Testis (tissue), 5 donors: ENCODE measurements at regions of chr12 and their contacts with region 1.

Region 1: DNA sequence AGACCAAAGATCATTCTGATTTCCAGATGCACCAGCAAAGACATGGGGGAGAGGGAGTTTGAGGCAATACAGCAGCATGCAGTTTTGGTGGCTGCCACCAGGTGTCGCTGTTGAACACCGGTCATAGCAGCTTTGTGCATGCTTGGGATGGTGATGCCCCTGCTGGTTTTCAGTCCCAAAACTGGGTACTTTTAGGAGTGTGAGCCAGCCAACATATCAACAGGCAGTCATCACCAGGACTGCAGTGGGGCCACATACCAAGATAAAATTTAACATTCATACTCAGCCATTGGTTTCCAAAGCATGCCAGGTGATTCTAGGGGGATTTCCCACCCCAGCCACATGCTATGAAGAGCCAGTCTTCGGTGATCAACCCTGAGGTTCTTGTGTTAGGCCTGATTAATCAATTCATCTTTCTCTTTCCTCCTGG is 64.2 kb downstream of the PHETA1 start:
- DNase-seq: peak; percentile 61
- H3K4me3 ChIP-seq: no peak overlapping the region
- H3K27ac ChIP-seq: no peak overlapping the region
- H3K4me1 ChIP-seq: no peaks in the 10 kb centered on the region
- H3K27me3 ChIP-seq: no peaks in the 10 kb centered on the region
- CTCF ChIP-seq: peak in 2 of 3 experiments; percentile 67 to 71
- POLR2A ChIP-seq: no peak

Region 2: GRCh38 chr12:110937104-110937641 is 367.5 kb before region 1 on chr12:
- intact Hi-C with region 1: loop called (anchors 10 kb)
- DNase-seq: peak; percentile 67
- H3K4me3 ChIP-seq: peak overlapping the region in 1 of 2 donors; percentile 15
- H3K27ac ChIP-seq: no peak overlapping the region
- H3K4me1 ChIP-seq: no peaks in the 10 kb centered on the region
- H3K27me3 ChIP-seq: no peaks in the 10 kb centered on the region
- CTCF ChIP-seq: peak; percentile 80 to 96 (median 87)
- POLR2A ChIP-seq: no peak

Region 3: GRCh38 chr12:111720457-111720856 is 415.8 kb after region 1 on chr12:
- intact Hi-C with region 1: no loop called
- DNase-seq: no peak
- H3K4me3 ChIP-seq: no peak overlapping the region
- H3K27ac ChIP-seq: no peak overlapping the region
- H3K4me1 ChIP-seq: no peaks in the 10 kb centered on the region
- H3K27me3 ChIP-seq: no peaks in the 10 kb centered on the region
- CTCF ChIP-seq: no peak
- POLR2A ChIP-seq: no peak

Region 4: GRCh38 chr12:111788178-111788654 is 483.6 kb after region 1 on chr12:
- intact Hi-C with region 1: no loop called
- DNase-seq: peak; percentile 58
- H3K4me3 ChIP-seq: no peak overlapping the region
- H3K27ac ChIP-seq: no peak overlapping the region
- H3K4me1 ChIP-seq: peaks cover 27% of the 10 kb centered on the region
- H3K27me3 ChIP-seq: no peaks in the 10 kb centered on the region
- CTCF ChIP-seq: no peak
- POLR2A ChIP-seq: no peak